Activated B cell treated with CpG ODN at 0.5 μM for 24 hours (primary cell): ENCODE measurements at regions of chr16 and their contacts with region 1.

Region 1: GRCh38 chr16:10964039-10964890 is 19.9 kb downstream of the CLEC16A start:
- DNase-seq: peak; percentile 78
- ATAC-seq: peak; percentile 35
- H3K4me3 Mint-ChIP-seq: peak overlapping the region; percentile 66
- H3K27ac Mint-ChIP-seq: peak overlapping the region; percentile 94
- H3K4me1 Mint-ChIP-seq: peaks cover 52% of the 10 kb centered on the region
- H3K27me3 Mint-ChIP-seq: no peaks in the 10 kb centered on the region
- CTCF ChIP-seq: peak; percentile 93

Region 2: DNA sequence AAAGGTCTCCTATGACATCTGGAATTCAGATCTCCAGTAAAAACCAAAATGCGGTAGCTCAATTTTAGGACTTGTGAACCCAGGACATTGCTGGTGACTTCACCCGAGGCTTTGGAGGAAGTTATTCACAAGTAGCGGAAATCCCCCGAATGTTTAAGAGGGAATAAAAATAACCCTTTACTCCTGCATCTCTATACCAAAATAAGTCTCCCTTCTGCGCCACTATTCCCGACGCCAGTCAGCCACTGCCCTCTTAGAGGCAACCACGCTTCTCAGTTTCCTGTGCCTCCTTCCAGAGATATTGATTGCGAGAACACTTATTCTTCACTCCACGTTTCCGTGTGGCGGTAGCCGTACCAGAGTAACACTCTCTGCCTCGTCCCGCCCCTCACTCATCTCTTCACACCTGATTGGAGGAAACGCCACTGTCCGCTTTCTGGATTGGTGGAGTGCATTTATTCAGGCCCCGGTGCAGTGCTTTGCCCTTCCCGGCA is 411.2 kb before region 1 on chr16:
- CTCF ChIA-PET with region 1: no interaction called
- POLR2A ChIA-PET with region 1: no interaction called
- intact Hi-C with region 1: no loop called
- DNase-seq: peak; percentile 69
- ATAC-seq: peak; percentile 97
- H3K4me3 Mint-ChIP-seq: peak overlapping the region; percentile 96
- H3K27ac Mint-ChIP-seq: peak overlapping the region; percentile 98
- H3K4me1 Mint-ChIP-seq: peaks cover 28% of the 10 kb centered on the region
- H3K27me3 Mint-ChIP-seq: no peaks in the 10 kb centered on the region
- CTCF ChIP-seq: no peak

Region 3: GRCh38 chr16:10812312-10813098 is 151.8 kb before region 1 on chr16:
- CTCF ChIA-PET with region 1: no interaction called
- POLR2A ChIA-PET with region 1: no interaction called
- intact Hi-C with region 1: no loop called
- DNase-seq: no peak
- ATAC-seq: peak; percentile 70
- H3K4me3 Mint-ChIP-seq: peak overlapping the region; percentile 49
- H3K27ac Mint-ChIP-seq: peak overlapping the region; percentile 62
- H3K4me1 Mint-ChIP-seq: peaks cover 63% of the 10 kb centered on the region
- H3K27me3 Mint-ChIP-seq: no peaks in the 10 kb centered on the region
- CTCF ChIP-seq: no peak

Region 4: DNA sequence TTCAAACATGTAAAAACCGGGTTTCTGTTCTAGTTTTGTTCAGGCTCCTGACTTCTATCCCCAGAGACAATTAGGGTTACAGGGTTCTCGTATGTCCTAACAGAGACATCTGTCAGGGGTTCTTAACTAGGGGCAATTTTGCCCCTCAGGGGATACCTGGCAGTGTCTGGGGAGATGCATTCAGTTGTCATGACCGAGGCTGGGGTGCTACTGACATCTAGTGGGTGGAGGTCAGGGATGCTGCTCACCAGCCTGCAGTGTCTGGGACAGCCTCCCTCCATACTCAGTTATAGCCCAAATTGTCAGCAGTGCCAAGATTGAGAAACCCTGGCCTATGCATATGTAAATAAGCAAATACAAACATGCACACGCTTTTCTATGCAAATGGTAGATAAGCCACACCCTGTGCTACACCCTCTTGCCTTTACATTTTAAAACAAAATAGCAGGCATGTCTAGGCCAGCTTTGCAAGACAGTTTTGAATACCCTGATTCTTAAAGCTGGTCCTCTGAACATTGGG is 17.5 kb after region 1 on chr16:
- CTCF ChIA-PET with region 1: interaction called, 25 read pairs
- POLR2A ChIA-PET with region 1: interaction called, 44 read pairs
- intact Hi-C with region 1: loop called (anchors 1 kb)
- DNase-seq: peak; percentile 64
- ATAC-seq: peak; percentile 88
- H3K4me3 Mint-ChIP-seq: peak overlapping the region; percentile 69
- H3K27ac Mint-ChIP-seq: peak overlapping the region; percentile 84
- H3K4me1 Mint-ChIP-seq: peaks cover 49% of the 10 kb centered on the region
- H3K27me3 Mint-ChIP-seq: no peaks in the 10 kb centered on the region
- CTCF ChIP-seq: no peak

Region 5: DNA sequence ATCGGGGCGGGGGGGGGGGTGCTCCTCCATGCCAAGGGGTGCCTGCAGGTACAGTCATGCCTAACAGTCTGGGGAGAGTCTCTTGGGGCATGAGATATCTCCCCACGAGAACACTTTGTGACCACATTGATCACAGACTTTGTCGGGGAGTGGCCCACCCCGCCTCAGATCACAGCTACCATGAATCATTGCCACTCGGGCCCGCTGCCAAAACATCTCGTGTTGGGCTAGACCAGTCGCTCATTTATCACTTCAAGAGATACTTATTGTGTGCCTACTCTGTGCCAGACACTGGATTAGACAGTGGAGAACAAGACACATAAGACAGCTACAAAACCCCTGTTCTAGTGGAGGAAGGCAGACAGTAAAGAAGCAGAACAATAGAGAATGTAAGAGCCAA is 52.7 kb after region 1 on chr16:
- CTCF ChIA-PET with region 1: no interaction called
- POLR2A ChIA-PET with region 1: no interaction called
- intact Hi-C with region 1: no loop called
- DNase-seq: no peak
- ATAC-seq: no peak
- H3K4me3 Mint-ChIP-seq: no peak overlapping the region
- H3K27ac Mint-ChIP-seq: no peak overlapping the region
- H3K4me1 Mint-ChIP-seq: no peaks in the 10 kb centered on the region
- H3K27me3 Mint-ChIP-seq: no peaks in the 10 kb centered on the region
- CTCF ChIP-seq: no peak

Region 6: DNA sequence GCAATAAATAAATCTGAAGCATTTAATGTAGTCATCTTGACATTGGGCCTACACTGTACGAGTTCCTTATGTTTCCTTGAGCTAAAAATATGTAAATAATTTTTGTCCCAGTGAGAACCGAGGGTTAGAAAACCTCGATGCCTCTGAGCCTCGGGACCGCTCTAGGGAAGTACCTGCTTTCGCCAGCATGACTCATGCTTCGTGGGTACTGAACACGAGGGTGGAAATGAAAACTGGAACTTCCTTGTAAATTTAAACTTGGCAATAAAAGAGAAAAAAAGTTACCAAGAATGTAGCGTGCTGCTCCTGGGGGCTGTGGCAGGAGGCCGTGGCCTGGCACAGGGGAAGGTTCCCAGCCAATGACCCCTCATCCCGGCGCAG is 217.6 kb after region 1 on chr16:
- CTCF ChIA-PET with region 1: interaction called, 4 read pairs
- POLR2A ChIA-PET with region 1: interaction called, 16 read pairs
- intact Hi-C with region 1: loop called (anchors 2 kb)
- DNase-seq: no peak
- ATAC-seq: peak; percentile 35
- H3K4me3 Mint-ChIP-seq: peak overlapping the region; percentile 64
- H3K27ac Mint-ChIP-seq: peak overlapping the region; percentile 87
- H3K4me1 Mint-ChIP-seq: peaks cover 58% of the 10 kb centered on the region
- H3K27me3 Mint-ChIP-seq: no peaks in the 10 kb centered on the region
- CTCF ChIP-seq: no peak

Region 7: DNA sequence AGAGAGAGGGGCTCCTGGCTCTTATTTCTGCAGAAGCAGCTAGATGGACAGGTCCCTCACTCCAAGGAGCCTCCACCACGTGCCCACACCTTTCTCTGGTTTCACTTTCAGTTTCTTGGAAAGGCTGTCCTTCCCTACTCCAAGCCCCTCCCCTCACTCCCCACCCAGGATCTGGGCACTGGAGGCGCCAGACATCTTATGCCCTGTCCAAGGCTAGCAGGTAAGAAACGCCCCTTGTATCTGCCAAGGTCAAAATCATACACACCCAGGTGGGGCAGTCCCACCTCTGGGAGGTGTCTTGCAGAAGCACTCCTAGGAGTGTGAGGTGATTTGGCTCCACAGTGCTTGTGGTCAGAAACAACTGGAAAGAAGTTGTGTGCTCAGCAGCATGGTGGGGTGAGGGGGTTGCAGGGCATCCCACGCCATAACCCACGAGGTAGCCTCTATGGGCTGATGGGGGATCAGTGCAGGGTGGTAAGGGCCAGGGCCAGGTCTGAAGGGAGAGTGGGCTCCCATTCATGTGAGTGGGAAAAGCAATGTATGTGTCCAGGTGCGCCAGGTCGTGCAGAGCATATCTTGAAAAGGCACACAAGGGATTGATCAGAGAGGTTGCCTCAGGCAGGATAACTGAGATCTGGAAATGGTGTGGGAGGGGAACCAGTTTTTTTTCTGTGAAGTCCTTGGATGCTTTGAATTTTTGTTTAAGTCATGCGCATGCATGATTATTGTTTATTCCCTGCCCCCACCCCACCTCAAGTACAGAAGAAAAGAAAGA is 348.6 kb after region 1 on chr16:
- CTCF ChIA-PET with region 1: interaction called, 4 read pairs
- POLR2A ChIA-PET with region 1: interaction called, 5 read pairs
- intact Hi-C with region 1: loop called (anchors 1 kb)
- DNase-seq: no peak
- ATAC-seq: no peak
- H3K4me3 Mint-ChIP-seq: no peak overlapping the region
- H3K27ac Mint-ChIP-seq: peak overlapping the region; percentile 47
- H3K4me1 Mint-ChIP-seq: peaks cover 74% of the 10 kb centered on the region
- H3K27me3 Mint-ChIP-seq: no peaks in the 10 kb centered on the region
- CTCF ChIP-seq: no peak

Region 8: DNA sequence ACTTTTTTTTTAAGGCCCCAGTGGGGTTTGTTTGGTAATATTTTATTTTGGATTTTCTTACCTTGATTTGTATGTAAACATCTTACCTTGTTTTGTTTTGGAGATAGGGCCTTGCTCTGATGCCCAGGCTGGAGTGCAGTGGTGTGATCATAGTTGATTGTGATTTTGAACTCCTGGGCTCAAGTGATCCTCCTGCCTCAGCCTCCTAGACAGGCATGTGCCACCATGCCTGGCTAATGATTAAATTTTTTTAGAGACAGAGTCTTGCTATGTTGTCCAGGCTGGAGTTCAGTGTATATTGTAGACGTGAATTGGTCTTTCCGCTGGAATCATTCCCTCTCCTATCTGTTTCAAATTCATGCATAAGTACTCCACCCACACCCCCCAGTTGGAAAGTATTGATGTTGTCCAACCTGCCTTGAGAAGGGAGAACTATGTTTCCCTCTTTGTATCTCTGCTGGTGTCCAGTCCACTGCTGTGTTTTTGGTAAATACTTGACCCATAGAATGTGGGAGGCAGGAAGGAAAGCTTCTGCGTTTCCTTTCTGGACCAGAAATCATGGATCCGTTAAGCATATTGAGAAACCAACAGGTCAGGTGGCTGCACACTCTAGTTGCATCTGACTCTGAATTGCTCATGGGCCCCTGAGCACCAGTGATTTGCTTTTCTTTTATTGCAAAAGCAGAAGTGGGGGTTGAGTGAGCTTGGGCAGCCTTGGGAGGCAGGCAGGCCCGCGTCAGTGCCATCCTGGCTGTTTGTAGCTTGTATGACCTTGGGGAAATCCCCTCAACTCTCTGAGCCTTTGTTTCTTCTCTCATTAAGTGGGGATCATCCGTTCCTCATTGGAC is 406.0 kb after region 1 on chr16:
- CTCF ChIA-PET with region 1: interaction called, 6 read pairs
- POLR2A ChIA-PET with region 1: interaction called, 5 read pairs
- intact Hi-C with region 1: loop called (anchors 1 kb)
- DNase-seq: peak; percentile 53
- ATAC-seq: peak; percentile 96
- H3K4me3 Mint-ChIP-seq: peak overlapping the region; percentile 69
- H3K27ac Mint-ChIP-seq: peak overlapping the region; percentile 80
- H3K4me1 Mint-ChIP-seq: peaks cover 40% of the 10 kb centered on the region
- H3K27me3 Mint-ChIP-seq: no peaks in the 10 kb centered on the region
- CTCF ChIP-seq: no peak

Region 9: DNA sequence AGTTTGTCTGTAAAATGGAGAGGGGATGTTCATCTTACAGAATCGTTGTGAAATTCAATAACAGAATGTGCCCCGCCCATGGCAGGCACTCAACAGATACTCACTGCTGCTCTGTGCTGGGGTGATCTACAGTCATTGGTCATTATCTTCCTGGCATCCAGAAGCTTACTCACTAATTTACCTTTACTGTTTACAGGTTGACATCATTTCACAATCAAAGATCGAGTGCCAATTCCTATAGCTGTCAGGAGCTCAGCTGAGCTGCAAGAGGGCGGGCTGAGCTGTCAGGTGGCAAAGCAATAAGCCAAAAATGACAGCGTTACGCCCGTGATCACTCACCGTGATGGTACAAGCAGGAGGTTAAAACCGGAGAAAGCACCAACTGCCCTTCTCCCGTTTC is 571.2 kb after region 1 on chr16:
- CTCF ChIA-PET with region 1: interaction called, 19 read pairs
- POLR2A ChIA-PET with region 1: no interaction called
- intact Hi-C with region 1: loop called (anchors 1 kb)
- DNase-seq: no peak
- ATAC-seq: no peak
- H3K4me3 Mint-ChIP-seq: no peak overlapping the region
- H3K27ac Mint-ChIP-seq: no peak overlapping the region
- H3K4me1 Mint-ChIP-seq: no peaks in the 10 kb centered on the region
- H3K27me3 Mint-ChIP-seq: no peaks in the 10 kb centered on the region
- CTCF ChIP-seq: no peak

Region 10: DNA sequence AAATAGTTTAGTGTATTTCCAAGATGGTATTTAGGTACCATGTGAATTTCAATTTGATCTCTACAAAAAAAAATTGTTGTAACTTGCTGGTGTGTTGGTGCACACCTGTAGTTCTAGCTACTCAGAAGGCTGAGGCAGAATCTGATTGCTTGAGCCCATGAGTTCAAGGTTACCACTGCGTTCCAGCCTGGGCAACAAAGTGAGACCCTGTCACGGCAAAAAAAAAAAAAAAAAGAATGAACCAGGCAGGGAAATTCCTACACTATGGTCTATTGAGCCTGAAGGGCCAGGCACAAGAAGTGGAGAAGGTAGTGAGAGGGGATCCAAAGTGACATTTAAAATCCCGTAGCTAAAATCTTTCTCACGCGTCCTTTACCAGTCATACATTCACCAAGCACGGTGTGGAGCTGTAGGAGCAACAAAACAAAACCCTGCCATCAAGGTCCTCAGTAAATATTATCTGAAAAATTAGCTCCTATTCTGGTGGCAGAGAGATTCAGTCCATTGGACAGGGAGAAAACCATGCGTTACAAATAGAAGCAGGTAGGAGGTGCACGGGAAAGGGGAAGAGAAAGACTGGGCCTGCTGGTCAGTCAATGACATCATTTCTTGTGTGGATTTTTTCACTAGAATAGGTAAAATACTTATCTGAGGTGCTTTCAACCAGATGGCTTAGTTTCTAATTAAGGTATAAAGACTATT is 751.1 kb after region 1 on chr16:
- CTCF ChIA-PET with region 1: interaction called, 26 read pairs
- POLR2A ChIA-PET with region 1: interaction called, 3 read pairs
- intact Hi-C with region 1: loop called (anchors 1 kb)
- DNase-seq: no peak
- ATAC-seq: peak; percentile 29
- H3K4me3 Mint-ChIP-seq: no peak overlapping the region
- H3K27ac Mint-ChIP-seq: peak overlapping the region; percentile 50
- H3K4me1 Mint-ChIP-seq: peaks cover 36% of the 10 kb centered on the region
- H3K27me3 Mint-ChIP-seq: no peaks in the 10 kb centered on the region
- CTCF ChIP-seq: no peak